ENCODE measurements at regions of chr3 and their contacts with region 1.

Region 1: DNA sequence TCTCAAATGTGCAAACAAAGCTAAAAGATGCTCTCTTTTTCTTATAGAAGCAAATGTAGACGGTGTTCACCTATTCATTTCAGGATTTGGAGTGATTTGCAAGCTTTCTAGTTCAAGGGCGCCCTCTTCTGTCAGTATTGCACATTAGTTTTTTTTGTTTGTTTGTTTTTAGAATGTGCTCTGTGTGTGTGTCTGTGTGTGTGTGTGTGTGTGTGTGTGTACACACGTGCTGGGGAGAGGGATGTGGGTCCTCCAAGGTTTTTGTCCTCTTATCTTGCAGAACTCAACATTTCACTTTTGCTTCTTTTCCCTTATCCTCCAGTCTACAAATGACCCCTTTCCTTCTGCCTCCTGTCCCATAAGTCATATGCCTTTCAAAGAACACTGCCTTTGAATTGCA is 23.5 kb downstream of the DNAH1 start:
- DNase-seq: peak in 7 of 9 donors; percentile 67 to 85 (median 76)
- ATAC-seq: peak; percentile 92
- H3K4me3 ChIP-seq: no peak overlapping the region
- H3K4me3 Mint-ChIP-seq: no peak overlapping the region
- H3K27ac ChIP-seq: no peak overlapping the region
- H3K27ac Mint-ChIP-seq: peak overlapping the region in 7 of 9 donors; percentile 1 to 78 (median 40)
- H3K4me1 ChIP-seq: no peaks in the 10 kb centered on the region
- H3K4me1 Mint-ChIP-seq: peaks cover 7 to 16% (median 8%) of the 10 kb centered on the region in 7 donors
- H3K27me3 ChIP-seq: no peaks in the 10 kb centered on the region
- H3K27me3 Mint-ChIP-seq: no peaks in the 10 kb centered on the region

Region 2: DNA sequence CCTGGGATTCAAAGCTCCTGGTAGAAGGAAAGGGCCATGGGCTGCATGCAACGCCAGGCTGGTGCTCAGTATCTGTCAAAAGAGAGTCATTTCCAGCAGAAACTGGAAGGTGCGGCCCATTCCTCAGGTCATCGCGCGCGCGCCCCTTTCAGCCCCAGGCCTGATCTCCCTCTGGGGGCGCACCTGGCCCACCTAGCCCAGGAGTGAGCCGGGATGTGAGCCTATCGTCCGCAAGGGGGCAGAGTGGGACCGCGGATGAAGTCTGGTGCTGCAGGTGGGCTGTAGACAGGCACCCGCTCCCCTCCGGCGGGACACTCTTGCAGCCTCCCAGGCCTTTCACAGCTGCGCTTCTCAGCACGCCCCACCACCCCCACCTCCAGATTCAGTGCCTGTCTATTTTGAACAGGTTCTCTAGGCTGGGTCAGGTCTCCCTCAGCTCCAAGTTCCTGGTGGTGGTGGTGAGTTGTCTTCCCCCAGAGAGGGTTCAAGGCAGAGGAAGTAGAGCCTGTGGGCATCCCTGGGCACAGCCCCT is 338.1 kb before region 1 on chr3:
- CTCF ChIA-PET with region 1: interaction called, 12 read pairs
- POLR2A ChIA-PET with region 1: no interaction called
- intact Hi-C with region 1: loop called in 1 of 2 experiments (anchors 10 kb)
- DNase-seq: peak; percentile 73 to 86 (median 81)
- ATAC-seq: peak; percentile 98
- H3K4me3 ChIP-seq: no peak overlapping the region
- H3K4me3 Mint-ChIP-seq: peak overlapping the region in 2 of 10 donors; percentile 12 to 16
- H3K27ac ChIP-seq: no peak overlapping the region
- H3K27ac Mint-ChIP-seq: peak overlapping the region in 3 of 9 donors; percentile 8 to 41 (median 11)
- H3K4me1 ChIP-seq: peaks cover 6 to 22% of the 10 kb centered on the region in 2 donors
- H3K4me1 Mint-ChIP-seq: peaks cover 6 to 24% (median 16%) of the 10 kb centered on the region in 7 donors
- H3K27me3 ChIP-seq: no peaks in the 10 kb centered on the region
- H3K27me3 Mint-ChIP-seq: peaks cover 0 to 16% (median 0%) of the 10 kb centered on the region in 5 donors

Region 3: GRCh38 chr3:52220380-52221026 is 119.1 kb before region 1 on chr3:
- CTCF ChIA-PET with region 1: interaction called, 58 read pairs
- POLR2A ChIA-PET with region 1: interaction called, 17 read pairs
- intact Hi-C with region 1: loop called (anchors 1 kb)
- DNase-seq: peak; percentile 75 to 90 (median 83)
- ATAC-seq: peak; percentile 88
- H3K4me3 ChIP-seq: peak overlapping the region; percentile 28
- H3K4me3 Mint-ChIP-seq: peak overlapping the region; percentile 39 to 77 (median 64)
- H3K27ac ChIP-seq: no peak overlapping the region
- H3K27ac Mint-ChIP-seq: peak overlapping the region; percentile 65 to 90 (median 77)
- H3K4me1 ChIP-seq: peaks cover 76 to 88% of the 10 kb centered on the region in 2 donors
- H3K4me1 Mint-ChIP-seq: peaks cover 65 to 95% (median 80%) of the 10 kb centered on the region in 7 donors
- H3K27me3 ChIP-seq: no peaks in the 10 kb centered on the region
- H3K27me3 Mint-ChIP-seq: no peaks in the 10 kb centered on the region

Region 4: GRCh38 chr3:52231502-52232293 is 107.9 kb before region 1 on chr3:
- CTCF ChIA-PET with region 1: interaction called, 92 read pairs
- POLR2A ChIA-PET with region 1: interaction called, 10 read pairs
- intact Hi-C with region 1: loop called (anchors 1 kb)
- DNase-seq: peak; percentile 77 to 96 (median 88)
- ATAC-seq: peak; percentile 91
- H3K4me3 ChIP-seq: no peak overlapping the region
- H3K4me3 Mint-ChIP-seq: peak overlapping the region; percentile 20 to 69 (median 53)
- H3K27ac ChIP-seq: peak overlapping the region; percentile 42
- H3K27ac Mint-ChIP-seq: peak overlapping the region; percentile 32 to 88 (median 80)
- H3K4me1 ChIP-seq: peaks cover 22 to 35% of the 10 kb centered on the region in 2 donors
- H3K4me1 Mint-ChIP-seq: peaks cover 40 to 63% (median 58%) of the 10 kb centered on the region in 7 donors
- H3K27me3 ChIP-seq: no peaks in the 10 kb centered on the region
- H3K27me3 Mint-ChIP-seq: no peaks in the 10 kb centered on the region

Region 5: GRCh38 chr3:52253314-52254304 is 86.0 kb before region 1 on chr3:
- CTCF ChIA-PET with region 1: interaction called, 10 read pairs
- POLR2A ChIA-PET with region 1: no interaction called
- intact Hi-C with region 1: loop called in 1 of 2 experiments (anchors 1 kb)
- DNase-seq: peak in 8 of 9 donors; percentile 81 to 95 (median 94)
- ATAC-seq: peak; percentile 95
- H3K4me3 ChIP-seq: peak overlapping the region; percentile 38
- H3K4me3 Mint-ChIP-seq: peak overlapping the region; percentile 82 to 97 (median 86)
- H3K27ac ChIP-seq: peak overlapping the region; percentile 87
- H3K27ac Mint-ChIP-seq: peak overlapping the region; percentile 92 to 100 (median 98)
- H3K4me1 ChIP-seq: peaks cover 55 to 91% of the 10 kb centered on the region in 2 donors
- H3K4me1 Mint-ChIP-seq: peaks cover 46 to 99% (median 92%) of the 10 kb centered on the region in 7 donors
- H3K27me3 ChIP-seq: no peaks in the 10 kb centered on the region
- H3K27me3 Mint-ChIP-seq: peaks cover 0 to 4% (median 0%) of the 10 kb centered on the region in 5 donors

Region 6: GRCh38 chr3:52298149-52299098 is 41.2 kb before region 1 on chr3:
- CTCF ChIA-PET with region 1: interaction called, 26 read pairs
- POLR2A ChIA-PET with region 1: no interaction called
- intact Hi-C with region 1: no loop called
- DNase-seq: no peak
- ATAC-seq: no peak
- H3K4me3 ChIP-seq: no peak overlapping the region
- H3K4me3 Mint-ChIP-seq: no peak overlapping the region
- H3K27ac ChIP-seq: no peak overlapping the region
- H3K27ac Mint-ChIP-seq: peak overlapping the region in 1 of 9 donors; percentile 41
- H3K4me1 ChIP-seq: no peaks in the 10 kb centered on the region
- H3K4me1 Mint-ChIP-seq: peaks cover 0 to 18% (median 6%) of the 10 kb centered on the region in 7 donors
- H3K27me3 ChIP-seq: no peaks in the 10 kb centered on the region
- H3K27me3 Mint-ChIP-seq: no peaks in the 10 kb centered on the region

Region 7: DNA sequence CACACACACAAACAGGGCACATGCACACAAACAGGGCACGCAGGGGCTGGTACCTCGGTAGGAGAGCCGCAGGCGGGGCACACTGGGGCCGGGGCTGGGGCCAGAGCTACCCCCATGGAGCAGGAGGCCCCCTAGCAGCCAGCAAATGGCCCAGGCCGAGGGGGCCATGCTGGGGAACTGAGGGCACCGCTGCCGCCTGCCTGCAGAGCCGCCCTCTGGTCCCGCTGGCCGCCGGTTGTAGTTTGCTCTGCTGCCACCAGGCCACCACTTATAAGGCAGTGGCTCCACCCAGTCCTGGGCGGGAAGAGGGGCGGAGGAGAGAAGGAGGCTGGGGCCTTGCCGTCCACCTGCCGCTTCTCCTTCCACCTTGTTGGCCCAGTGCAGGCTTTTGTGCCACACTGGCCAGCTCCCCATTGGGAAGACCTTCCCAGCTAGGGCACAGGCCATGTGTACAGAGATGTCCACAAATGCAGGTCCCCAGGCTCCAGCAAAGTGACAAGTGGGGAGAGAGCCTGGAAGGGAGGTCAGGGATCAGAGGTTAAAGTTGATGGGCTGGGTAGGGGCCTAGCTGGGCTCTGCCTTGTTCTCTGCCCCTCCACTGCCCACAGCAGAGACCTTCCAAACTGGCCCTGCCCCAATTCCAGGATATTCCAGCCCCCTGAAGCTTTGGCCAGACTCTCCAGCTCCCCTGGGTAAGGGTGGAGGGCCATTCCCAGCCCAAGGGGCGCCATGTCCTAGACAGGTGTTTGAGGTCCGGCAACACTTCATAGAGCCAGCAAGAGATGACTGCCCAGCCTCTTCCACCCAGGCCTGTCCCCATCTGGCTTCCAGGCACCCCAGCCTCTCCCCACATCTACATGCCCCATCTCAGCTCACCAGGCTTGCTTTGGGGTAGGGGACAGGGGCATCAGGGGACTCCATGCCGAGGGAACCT is 105.5 kb after region 1 on chr3 and contains the start of gene SEMA3G:
- CTCF ChIA-PET with region 1: no interaction called
- POLR2A ChIA-PET with region 1: no interaction called
- intact Hi-C with region 1: loop called in 1 of 2 experiments (anchors 1 kb)
- DNase-seq: peak; percentile 39 to 78 (median 63)
- ATAC-seq: peak; percentile 94
- H3K4me3 ChIP-seq: no peak within 1 kb of the TSS
- H3K4me3 Mint-ChIP-seq: no peak within 1 kb of the TSS
- H3K27ac ChIP-seq: no peak within 1 kb of the TSS
- H3K27ac Mint-ChIP-seq: peak within 1 kb of the TSS in 1 of 9 donors; percentile 59
- H3K4me1 ChIP-seq: peaks cover 0 to 9% of the 10 kb centered on the region in 2 donors
- H3K4me1 Mint-ChIP-seq: peaks cover 6 to 13% (median 9%) of the 10 kb centered on the region in 7 donors
- H3K27me3 ChIP-seq: no peaks in the 10 kb centered on the region
- H3K27me3 Mint-ChIP-seq: no peaks in the 10 kb centered on the region
- total RNA-seq, gene SEMA3G: 0.10 to 0.24 TPM in 2 of 5 experiments, not detected in the others

Region 8: DNA sequence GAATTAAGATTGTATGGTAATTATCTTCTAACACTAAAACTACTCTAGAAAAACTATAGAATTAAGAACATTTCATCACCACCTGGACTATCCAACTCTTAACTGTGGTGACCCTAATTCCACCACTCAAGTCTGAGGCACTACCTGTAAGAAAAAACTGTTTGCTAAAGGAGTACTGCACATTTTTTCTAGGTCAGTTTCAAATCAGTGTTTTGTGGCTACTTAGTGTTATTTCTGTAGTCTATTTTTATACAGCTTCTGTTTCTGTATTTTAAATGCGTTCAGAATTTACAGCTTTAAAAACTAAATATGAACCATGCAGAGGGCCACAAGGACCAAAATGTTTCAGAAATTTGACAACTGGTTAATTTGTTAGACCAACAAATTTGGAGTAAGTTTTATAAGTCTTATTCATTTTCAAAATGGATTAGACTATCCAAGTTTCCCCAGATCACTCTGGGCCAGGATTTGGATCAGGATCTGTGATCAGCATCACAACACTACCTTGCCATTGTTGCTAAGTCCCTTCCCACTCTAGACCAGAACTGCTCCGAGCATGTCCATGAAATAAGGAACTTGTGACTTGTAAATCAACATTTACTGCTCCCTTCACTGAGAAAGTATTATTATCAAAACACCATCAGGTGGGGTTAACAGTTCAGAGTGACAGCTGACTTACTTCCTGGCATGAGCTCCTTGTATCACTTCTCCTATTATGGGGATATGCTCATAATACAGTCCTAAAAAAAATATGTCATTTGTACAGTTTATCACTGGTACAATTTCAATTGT is 357.4 kb after region 1 on chr3:
- CTCF ChIA-PET with region 1: no interaction called
- POLR2A ChIA-PET with region 1: no interaction called
- intact Hi-C with region 1: no loop called
- DNase-seq: no peak
- ATAC-seq: peak; percentile 66
- H3K4me3 ChIP-seq: no peak overlapping the region
- H3K4me3 Mint-ChIP-seq: no peak overlapping the region
- H3K27ac ChIP-seq: peak overlapping the region; percentile 37
- H3K27ac Mint-ChIP-seq: peak overlapping the region in 7 of 9 donors; percentile 25 to 80 (median 62)
- H3K4me1 ChIP-seq: no peaks in the 10 kb centered on the region
- H3K4me1 Mint-ChIP-seq: peaks cover 0 to 18% (median 9%) of the 10 kb centered on the region in 7 donors
- H3K27me3 ChIP-seq: no peaks in the 10 kb centered on the region
- H3K27me3 Mint-ChIP-seq: no peaks in the 10 kb centered on the region